ENCODE measurements at regions of chr16 and their contacts with region 1.

Region 1: DNA sequence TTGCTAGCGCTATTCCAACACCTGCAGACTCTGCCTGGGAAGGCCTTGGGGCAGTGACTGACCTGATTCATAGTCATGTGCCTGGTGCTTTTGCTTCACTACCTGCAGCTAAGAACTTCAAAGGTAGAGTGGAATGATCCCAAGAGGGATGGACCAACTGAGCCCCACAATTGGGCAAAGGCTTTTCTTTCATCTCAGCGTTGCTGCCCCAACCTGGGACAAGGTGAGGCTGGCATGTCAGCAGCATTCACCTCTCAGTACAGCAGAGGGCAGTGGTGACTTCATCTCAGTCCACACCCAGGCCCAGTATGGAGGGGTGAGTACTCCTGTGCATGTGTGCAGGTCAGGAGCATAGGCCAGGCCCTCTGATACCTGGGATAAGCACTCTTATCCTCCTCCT is 149.6 kb upstream of the GNAO1 start:
- DNase-seq: no peak
- H3K4me3 ChIP-seq: no peak overlapping the region
- H3K27ac ChIP-seq: no peak overlapping the region
- H3K4me1 ChIP-seq: no peaks in the 10 kb centered on the region
- H3K27me3 ChIP-seq: no peaks in the 10 kb centered on the region
- CTCF ChIP-seq: peak in 3 of 4 experiments; percentile 20 to 41 (median 29)
- POLR2A ChIP-seq: no peak

Region 2: DNA sequence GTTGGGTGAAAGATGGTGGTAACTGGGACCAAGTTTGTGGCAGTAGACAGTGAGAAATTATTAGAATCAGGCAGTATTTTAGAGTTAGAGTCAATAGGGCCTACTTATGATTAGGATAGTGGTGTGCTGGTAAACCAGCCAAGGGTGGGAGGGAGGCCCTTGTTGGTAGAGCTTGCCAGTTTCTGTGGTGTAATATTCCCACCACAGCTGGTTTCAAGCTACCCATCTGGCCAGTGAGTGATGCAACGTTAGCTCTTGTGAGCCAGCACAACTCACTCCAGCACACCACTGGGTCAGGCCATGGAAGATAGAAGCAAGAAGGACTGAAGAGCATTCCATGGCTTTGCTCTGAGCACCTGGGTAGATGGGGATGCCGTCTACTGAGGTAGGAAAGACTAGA is 184.5 kb after region 1 on chr16:
- intact Hi-C with region 1: no loop called
- DNase-seq: no peak
- H3K4me3 ChIP-seq: no peak overlapping the region
- H3K27ac ChIP-seq: no peak overlapping the region
- H3K4me1 ChIP-seq: no peaks in the 10 kb centered on the region
- H3K27me3 ChIP-seq: no peaks in the 10 kb centered on the region
- CTCF ChIP-seq: no peak
- POLR2A ChIP-seq: no peak

Region 3: GRCh38 chr16:56317998-56318826 is 276.5 kb after region 1 on chr16:
- intact Hi-C with region 1: loop called (anchors 5 kb)
- DNase-seq: peak; percentile 75
- H3K4me3 ChIP-seq: peak overlapping the region in 1 of 2 donors; percentile 13
- H3K27ac ChIP-seq: no peak overlapping the region
- H3K4me1 ChIP-seq: no peaks in the 10 kb centered on the region
- H3K27me3 ChIP-seq: no peaks in the 10 kb centered on the region
- CTCF ChIP-seq: peak; percentile 94 to 96 (median 96)
- POLR2A ChIP-seq: no peak